Activated CD4-positive, alpha-beta T cell treated with anti-CD3 and anti-CD28 coated beads, Interleukin-2, amount 10 ng/mL, durations not matched to agents 24 days and 14 days (primary cell): ENCODE measurements at regions of chr1 and their contacts with region 1.

Region 1: GRCh38 chr1:111603979-111604378 is 15.6 kb upstream of the RAP1A start:
- DNase-seq: peak; percentile 94
- H3K4me3 Mint-ChIP-seq: peak overlapping the region; percentile 87
- H3K27ac Mint-ChIP-seq: peak overlapping the region; percentile 98
- H3K4me1 Mint-ChIP-seq: peaks cover 66% of the 10 kb centered on the region
- H3K27me3 Mint-ChIP-seq: no peaks in the 10 kb centered on the region

Region 2: GRCh38 chr1:111587509-111588174 is 16.3 kb before region 1 on chr1:
- intact Hi-C with region 1: loop called (anchors 2 kb)
- DNase-seq: no peak
- H3K4me3 Mint-ChIP-seq: no peak overlapping the region
- H3K27ac Mint-ChIP-seq: no peak overlapping the region
- H3K4me1 Mint-ChIP-seq: peaks cover 24% of the 10 kb centered on the region
- H3K27me3 Mint-ChIP-seq: no peaks in the 10 kb centered on the region

Region 3: DNA sequence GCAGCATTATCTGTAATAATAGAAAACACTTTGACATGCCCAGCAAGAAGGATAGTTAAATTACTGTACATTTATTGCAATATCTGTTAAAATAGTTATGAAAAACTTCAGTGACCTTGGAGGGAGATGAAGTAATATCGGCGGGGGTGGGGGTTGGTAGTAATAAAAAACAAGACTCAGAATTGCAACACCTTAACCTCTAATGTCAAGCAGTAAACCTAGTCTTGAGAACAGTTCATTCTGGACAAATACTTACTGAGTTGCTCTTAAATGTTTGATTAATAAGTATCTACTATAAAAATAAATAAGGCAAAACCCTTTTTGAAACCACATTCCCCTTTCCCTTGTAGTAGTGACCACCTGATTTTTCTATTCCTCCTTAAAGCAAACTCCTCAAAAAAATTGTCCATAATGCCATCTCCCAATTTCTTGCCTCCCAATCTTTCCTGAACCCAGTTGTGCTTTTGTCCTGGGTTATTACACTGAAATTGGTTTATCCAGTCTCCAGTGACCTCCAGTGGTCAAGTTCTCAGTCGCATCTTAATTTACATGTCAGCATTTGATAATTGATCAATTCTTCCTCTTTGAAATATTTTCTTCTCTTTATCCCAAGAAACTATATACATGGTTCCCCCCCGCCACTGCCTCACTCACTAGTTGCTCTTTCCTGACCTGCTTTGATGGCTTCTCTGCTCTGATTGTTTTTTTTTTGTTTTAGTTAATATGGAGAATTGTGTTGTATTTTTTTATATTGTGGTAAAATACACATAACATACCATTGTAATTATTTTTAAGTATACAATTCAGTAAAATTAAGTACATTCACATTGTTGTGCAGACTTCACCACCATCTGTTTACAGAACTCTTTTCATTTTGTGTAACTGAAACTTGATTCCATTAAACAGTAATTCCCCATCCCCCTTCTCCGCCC is 52.4 kb after region 1 on chr1:
- intact Hi-C with region 1: no loop called
- DNase-seq: peak; percentile 68
- H3K4me3 Mint-ChIP-seq: no peak overlapping the region
- H3K27ac Mint-ChIP-seq: peak overlapping the region; percentile 10
- H3K4me1 Mint-ChIP-seq: peaks cover 34% of the 10 kb centered on the region
- H3K27me3 Mint-ChIP-seq: no peaks in the 10 kb centered on the region